ENCODE measurements at regions of chr16 and their contacts with region 1.

Region 1: DNA sequence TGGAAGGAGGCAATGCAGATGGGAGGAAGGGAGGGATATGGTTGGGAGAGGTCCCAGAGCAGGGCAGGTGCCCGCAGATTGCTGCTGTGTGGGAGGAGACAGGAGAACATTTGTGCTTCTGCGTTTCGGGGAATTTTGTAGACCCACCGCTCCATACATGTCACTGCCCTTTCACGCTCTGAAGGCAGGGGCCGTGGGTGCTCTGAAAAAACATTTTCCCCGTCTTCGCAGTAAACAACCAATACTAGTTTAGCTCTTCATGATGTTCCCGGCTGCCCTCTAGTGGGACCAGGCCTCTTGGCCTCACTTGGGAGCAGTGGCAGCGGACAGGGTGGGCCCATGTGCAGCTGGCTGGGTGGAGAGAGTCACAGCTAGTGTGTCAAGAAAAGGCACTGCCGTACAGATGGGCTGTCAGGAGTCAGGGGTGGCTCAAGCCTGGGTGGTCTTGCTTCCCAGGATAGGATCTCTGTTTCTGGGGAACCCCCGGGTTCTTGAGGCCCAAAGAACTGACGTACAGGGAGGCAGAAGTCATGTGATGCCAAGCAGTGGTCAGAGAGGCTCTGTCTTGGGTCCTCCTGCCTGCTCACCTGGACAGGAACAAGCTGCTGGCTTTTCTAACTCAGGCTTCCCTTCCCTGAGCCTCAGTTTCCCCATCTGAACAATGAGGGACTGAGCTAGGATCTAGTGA is 46.5 kb upstream of the CPNE2 start:
- DNase-seq: no peak
- H3K4me3 ChIP-seq: no peak overlapping the region
- CTCF ChIP-seq: peak; percentile 81

Region 2: GRCh38 chr16:57013229-57013628 is 32.6 kb before region 1 on chr16:
- CTCF ChIA-PET with region 1: no interaction called
- POLR2A ChIA-PET with region 1: no interaction called
- DNase-seq: no peak
- H3K4me3 ChIP-seq: no peak overlapping the region
- CTCF ChIP-seq: no peak

Region 3: DNA sequence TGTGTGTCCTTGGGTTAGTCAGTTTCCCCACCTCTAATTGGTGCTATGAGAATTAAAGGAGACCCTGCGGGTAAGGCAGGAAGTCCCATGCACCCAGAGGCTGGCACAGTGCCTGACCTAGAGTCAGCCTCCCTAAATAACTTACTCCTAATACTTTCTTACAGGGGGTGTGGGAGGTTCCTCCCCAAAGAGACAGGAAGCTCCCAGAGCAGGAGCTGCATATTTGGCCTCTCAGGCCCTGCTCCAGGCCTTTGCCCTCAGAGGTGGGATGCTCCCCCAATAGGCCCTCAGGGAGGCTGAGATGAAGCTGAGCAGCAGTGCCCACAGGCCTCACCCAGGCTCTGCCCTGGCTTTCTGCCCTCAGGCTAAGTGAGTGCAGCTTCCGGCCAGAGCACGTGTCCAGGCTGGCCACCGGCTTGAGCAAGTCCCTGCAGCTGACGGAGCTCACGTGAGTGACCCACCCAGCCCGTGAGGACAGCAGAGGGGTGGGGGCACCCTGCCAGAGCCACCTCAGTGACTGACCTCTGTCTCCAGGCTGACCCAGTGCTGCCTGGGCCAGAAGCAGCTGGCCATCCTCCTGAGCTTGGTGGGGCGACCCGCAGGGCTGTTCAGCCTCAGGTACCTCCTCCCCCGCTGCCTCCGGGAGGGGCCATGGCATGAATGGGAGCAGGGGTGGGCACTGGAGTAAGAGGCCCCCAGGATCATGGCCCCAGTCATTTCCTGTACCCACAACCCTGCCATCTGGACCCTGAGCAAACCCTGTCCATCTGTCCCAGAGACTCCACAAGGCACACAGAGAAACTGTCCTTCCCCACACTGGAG is 15.5 kb after region 1 on chr16:
- CTCF ChIA-PET with region 1: interaction called, 38 read pairs
- POLR2A ChIA-PET with region 1: no interaction called
- DNase-seq: no peak
- H3K4me3 ChIP-seq: no peak overlapping the region
- CTCF ChIP-seq: no peak

Region 4: DNA sequence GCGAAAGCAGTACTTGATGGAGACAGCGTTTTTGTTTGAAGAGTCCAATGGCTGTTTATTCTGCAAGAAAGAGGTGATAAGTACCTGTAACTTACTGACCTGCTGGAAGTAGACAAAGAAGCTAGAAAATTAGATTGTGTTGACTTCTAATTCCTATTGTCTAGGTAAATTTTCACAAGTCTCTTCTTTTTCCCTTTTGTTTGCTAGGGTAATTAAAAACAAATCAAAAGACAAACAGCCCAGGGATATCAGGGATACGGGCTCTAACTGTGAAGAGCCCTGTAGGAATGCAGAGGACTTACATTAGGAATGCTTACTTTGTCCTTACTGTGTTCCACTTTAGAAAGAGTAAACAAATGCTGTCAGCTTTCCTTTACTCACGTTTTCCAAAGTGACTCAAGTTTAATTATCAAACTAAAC is 133.0 kb after region 1 on chr16:
- CTCF ChIA-PET with region 1: no interaction called
- POLR2A ChIA-PET with region 1: no interaction called
- DNase-seq: no peak
- H3K4me3 ChIP-seq: no peak overlapping the region
- CTCF ChIP-seq: no peak